ENCODE measurements at regions of chr18 and their contacts with region 1.

Region 1: GRCh38 chr18:8800449-8800848 is 95.1 kb downstream of the MTCL1 start:
- DNase-seq: peak; percentile 98
- ATAC-seq: peak; percentile 61
- H3K4me3 ChIP-seq: peak overlapping the region; percentile 24; the same call in 1 of the 2 replicates
- H3K27ac ChIP-seq: peak overlapping the region; percentile 95
- H3K4me1 ChIP-seq: peaks cover 68% of the 10 kb centered on the region
- H3K27me3 ChIP-seq: no peaks in the 10 kb centered on the region
- CTCF ChIP-seq: no peak

Region 2: DNA sequence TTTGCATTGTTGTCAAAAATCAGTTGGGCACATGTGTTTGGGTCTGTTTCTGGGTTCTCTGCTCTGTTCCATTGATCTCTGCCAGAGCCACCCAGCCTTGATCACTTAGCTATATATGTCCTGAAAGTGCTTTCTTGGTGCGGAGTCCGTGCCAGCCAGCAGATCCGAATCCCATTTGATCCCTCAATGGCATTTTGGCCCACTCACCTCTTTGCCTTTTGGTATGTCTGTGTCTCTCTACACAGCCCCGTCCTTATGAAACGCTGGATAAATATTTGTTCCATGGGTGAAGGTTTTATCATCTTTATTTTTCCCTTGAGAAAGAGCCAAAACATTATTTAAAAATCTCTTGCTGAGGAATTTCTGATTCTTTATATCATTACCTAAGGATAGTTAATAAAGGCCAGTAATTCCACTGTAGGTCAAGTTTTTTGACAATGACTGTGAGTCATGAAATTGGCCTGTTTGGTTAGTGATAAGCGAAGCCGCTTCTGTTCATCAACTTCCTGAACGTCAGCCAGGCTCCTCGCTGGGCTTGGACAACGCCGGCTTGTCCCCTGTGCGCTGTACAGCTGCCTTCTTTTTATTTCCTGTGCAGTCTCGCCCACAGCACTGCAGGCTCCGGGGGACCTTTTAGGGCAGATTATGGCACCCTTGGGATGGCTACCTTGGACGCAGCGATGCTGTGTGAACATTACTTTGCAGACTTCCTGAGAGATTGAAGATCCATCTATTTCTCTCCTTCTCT is 70.2 kb before region 1 on chr18:
- CTCF ChIA-PET with region 1: interaction called, 6 read pairs
- POLR2A ChIA-PET with region 1: no interaction called
- intact Hi-C with region 1: loop called (anchors 1 kb)
- DNase-seq: peak; percentile 96
- ATAC-seq: peak; percentile 97
- H3K4me3 ChIP-seq: peak overlapping the region; percentile 48
- H3K27ac ChIP-seq: peak overlapping the region; percentile 82
- H3K4me1 ChIP-seq: peaks cover 19% of the 10 kb centered on the region
- H3K27me3 ChIP-seq: no peaks in the 10 kb centered on the region
- CTCF ChIP-seq: no peak

Region 3: DNA sequence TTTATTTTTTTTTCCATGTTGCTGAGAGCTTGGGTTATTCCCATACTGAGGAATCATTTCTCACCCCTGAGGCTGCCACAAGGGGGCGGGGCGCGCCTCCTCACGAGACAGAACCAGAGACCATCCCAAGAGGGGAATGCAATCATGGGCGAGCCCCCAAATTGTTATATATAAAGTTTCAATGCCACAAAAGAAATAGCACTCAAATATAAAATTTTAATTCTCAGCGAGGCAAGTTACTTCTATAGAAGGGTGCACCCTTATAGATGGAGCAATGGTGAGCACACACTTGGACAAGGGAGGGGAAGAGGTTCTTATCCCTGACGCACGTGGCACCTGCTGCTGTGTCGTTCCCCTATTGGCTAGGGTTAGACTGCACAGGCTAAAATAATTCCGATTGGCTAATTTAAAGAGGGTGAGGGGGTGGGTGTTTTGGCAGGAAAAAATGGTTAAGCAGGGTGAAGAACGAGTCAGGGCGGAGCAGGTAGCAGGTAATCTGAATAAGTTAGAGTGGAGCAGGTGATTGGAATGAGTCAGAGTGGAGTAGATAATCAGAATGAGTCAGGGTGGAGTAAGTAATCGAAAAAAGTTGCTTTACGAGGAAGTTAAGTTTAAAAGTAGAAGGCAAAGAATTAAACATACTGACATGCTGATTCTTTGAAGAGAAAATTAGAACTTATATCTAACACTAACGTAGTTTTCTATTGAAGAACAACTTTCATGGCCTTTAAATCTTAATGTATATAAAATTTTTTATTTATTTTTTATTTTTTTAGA is 82.4 kb after region 1 on chr18:
- CTCF ChIA-PET with region 1: no interaction called
- POLR2A ChIA-PET with region 1: no interaction called
- intact Hi-C with region 1: loop called (anchors 2 kb)
- DNase-seq: peak; percentile 93
- ATAC-seq: peak; percentile 89
- H3K4me3 ChIP-seq: no peak overlapping the region
- H3K27ac ChIP-seq: peak overlapping the region; percentile 88
- H3K4me1 ChIP-seq: peaks cover 15% of the 10 kb centered on the region
- H3K27me3 ChIP-seq: no peaks in the 10 kb centered on the region
- CTCF ChIP-seq: peak; percentile 81

Region 4: GRCh38 chr18:8948471-8949149 is 148.2 kb after region 1 on chr18:
- CTCF ChIA-PET with region 1: no interaction called
- POLR2A ChIA-PET with region 1: interaction called, 4 read pairs
- intact Hi-C with region 1: loop called (anchors 5 kb)
- DNase-seq: peak; percentile 93
- ATAC-seq: peak; percentile 82
- H3K4me3 ChIP-seq: peak overlapping the region; percentile 44
- H3K27ac ChIP-seq: peak overlapping the region; percentile 50
- H3K4me1 ChIP-seq: peaks cover 71% of the 10 kb centered on the region
- H3K27me3 ChIP-seq: no peaks in the 10 kb centered on the region
- CTCF ChIP-seq: no peak

Region 5: DNA sequence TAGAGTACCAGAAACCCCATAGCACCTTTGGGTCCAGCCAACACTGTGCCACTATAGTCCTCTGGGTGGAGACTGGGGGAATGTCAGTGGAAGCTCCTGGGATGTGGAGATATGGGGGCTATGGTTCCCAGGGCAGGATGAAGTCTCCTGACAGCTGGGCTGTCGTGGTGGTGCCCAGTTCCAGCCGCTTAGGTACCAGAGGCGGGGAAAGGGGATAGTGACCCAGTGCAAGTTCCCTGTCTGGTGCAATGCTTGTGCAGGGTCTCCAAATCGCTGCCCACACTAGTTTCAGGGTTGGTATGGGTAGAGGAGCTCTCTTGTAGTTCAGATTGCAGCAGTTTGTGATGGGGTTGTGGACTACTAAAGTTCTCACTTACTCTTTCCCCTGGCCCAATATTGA is 434.1 kb after region 1 on chr18:
- CTCF ChIA-PET with region 1: no interaction called
- POLR2A ChIA-PET with region 1: interaction called, 15 read pairs
- intact Hi-C with region 1: no loop called
- DNase-seq: no peak
- ATAC-seq: no peak
- H3K4me3 ChIP-seq: no peak overlapping the region
- H3K27ac ChIP-seq: no peak overlapping the region
- H3K4me1 ChIP-seq: no peaks in the 10 kb centered on the region
- H3K27me3 ChIP-seq: no peaks in the 10 kb centered on the region
- CTCF ChIP-seq: no peak

Measured in PC-3 (cell line).